ENCODE measurements at regions of chr16 and their contacts with region 1.

Region 1: DNA sequence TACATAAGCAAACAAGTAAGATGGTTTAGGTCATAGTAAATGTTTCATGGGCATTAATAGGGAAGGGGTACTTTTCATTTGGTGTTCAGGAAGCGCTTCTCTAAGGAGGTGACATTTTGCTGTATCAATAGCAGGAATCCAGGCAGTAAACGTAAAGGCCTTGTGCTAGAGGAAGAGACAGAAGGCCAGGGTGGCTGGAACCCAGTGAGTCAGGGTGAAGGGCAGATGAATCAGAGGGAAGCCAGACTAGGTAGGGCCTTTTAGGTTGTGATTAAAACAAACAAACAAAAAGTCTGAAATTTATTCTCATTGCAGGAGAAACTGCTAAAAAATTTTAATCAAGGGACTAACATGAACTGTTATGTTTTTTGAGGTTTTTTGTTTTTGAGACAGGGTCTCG is 6.5 kb downstream of the BMERB1 start:
- DNase-seq: no peak
- H3K4me3 ChIP-seq: no peak overlapping the region
- H3K27ac ChIP-seq: no peak overlapping the region
- H3K4me1 ChIP-seq: peaks cover 5% of the 10 kb centered on the region
- H3K27me3 ChIP-seq: no peaks in the 10 kb centered on the region
- CTCF ChIP-seq: no peak
- EP300 ChIP-seq: no peak
- POLR2A ChIP-seq: no peak

Region 2: DNA sequence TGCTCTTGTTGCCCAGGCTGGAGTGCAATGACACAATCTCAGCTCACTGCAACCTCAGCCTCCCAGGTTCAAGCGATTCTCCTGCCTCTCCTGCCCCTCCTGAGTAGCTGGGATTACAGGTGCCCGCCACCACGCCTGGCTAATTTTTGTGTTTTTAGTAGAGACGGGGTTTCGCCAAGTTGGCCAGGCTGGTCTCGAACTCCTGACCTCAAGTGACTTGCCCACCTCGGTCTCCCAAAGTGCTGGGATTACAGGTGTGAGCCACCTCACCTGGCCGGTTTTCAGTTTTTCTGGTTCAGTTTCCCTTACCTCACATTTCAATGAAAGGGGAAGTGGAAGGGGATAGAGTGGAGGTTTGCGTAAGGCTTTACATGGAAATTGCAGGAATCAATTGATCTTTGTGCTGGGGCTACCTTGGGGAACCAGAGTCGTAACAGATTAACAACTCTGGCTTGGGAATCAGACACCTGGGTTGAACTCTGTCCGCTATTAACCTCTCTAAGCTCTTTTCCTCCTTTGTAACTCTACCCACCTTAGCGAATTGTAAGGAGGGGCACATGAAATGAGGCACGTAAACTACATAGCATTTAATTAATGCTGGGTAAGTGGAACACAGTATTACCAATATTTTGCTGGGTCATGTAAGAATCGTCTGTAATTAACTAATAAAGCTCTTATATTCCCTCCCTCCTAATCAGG is 42.1 kb before region 1 on chr16:
- intact Hi-C with region 1: loop called in 1 of 4 experiments (anchors 2 kb)
- DNase-seq: no peak
- H3K4me3 ChIP-seq: no peak overlapping the region
- H3K27ac ChIP-seq: no peak overlapping the region
- H3K4me1 ChIP-seq: peaks cover 2% of the 10 kb centered on the region
- H3K27me3 ChIP-seq: no peaks in the 10 kb centered on the region
- CTCF ChIP-seq: no peak
- EP300 ChIP-seq: no peak
- POLR2A ChIP-seq: no peak

Region 3: GRCh38 chr16:15618392-15618791 is 177.5 kb after region 1 on chr16:
- intact Hi-C with region 1: no loop called
- DNase-seq: no peak
- H3K4me3 ChIP-seq: no peak overlapping the region
- H3K27ac ChIP-seq: no peak overlapping the region
- H3K4me1 ChIP-seq: no peaks in the 10 kb centered on the region
- H3K27me3 ChIP-seq: no peaks in the 10 kb centered on the region
- CTCF ChIP-seq: no peak
- EP300 ChIP-seq: no peak
- POLR2A ChIP-seq: no peak

Measured in ovary (tissue), 10 donors.